Endothelial cell of umbilical vein (primary cell): ENCODE measurements at regions of chr3 and their contacts with region 1.

Region 1: DNA sequence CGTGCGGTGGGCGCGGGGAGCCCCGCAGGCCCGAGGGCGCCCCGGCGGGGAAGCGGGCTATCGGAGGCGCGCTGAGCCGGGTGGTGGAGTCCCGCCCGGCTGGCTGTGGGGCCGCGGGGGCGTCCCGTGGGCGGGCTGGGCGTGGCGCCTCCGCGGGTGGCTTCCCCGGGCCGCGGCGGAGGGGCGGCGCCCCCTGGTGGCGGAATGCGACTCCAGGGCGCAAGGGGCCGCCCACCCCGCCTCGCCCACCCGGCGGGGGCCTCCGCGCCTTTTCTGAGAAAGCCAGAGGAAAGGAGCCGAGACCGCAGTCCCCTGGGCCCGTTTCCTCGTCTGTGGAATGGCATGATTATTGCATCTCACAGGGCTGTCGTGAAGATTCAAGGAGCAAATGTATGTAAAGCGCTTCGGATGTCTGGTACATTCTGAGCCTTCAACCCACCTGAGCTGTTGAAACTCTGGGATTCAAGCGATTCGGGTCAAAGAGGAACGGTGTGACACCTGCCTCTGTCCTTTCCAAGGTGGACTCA is 31.9 kb upstream of the RAB6B start:
- DNase-seq: peak; percentile 37
- H3K4me3 ChIP-seq: peak overlapping the region; percentile 32 to 53 (median 39)
- H3K27ac ChIP-seq: no peak overlapping the region
- H3K4me1 ChIP-seq: peaks cover 7% of the 10 kb centered on the region
- H3K27me3 ChIP-seq: no peaks in the 10 kb centered on the region
- CTCF ChIP-seq: peak; percentile 70 to 87
- POLR2A ChIP-seq: no peak

Region 2: GRCh38 chr3:133487920-133488540 is 439.6 kb before region 1 on chr3:
- CTCF ChIA-PET with region 1: no interaction called
- POLR2A ChIA-PET with region 1: no interaction called
- dilution Hi-C with region 1: no loop called
- intact Hi-C with region 1: loop called (anchors 2 kb)
- DNase-seq: peak; percentile 37
- H3K4me3 ChIP-seq: no peak overlapping the region
- H3K27ac ChIP-seq: no peak overlapping the region
- H3K4me1 ChIP-seq: no peaks in the 10 kb centered on the region
- H3K27me3 ChIP-seq: no peaks in the 10 kb centered on the region
- CTCF ChIP-seq: peak; percentile 53 to 54
- POLR2A ChIP-seq: no peak

Region 3: GRCh38 chr3:133821767-133822638 is 105.6 kb before region 1 on chr3:
- CTCF ChIA-PET with region 1: interaction called, 29 read pairs
- POLR2A ChIA-PET with region 1: no interaction called
- dilution Hi-C with region 1: no loop called
- intact Hi-C with region 1: loop called (anchors 1 kb)
- DNase-seq: peak; percentile 44
- H3K4me3 ChIP-seq: no peak overlapping the region
- H3K27ac ChIP-seq: no peak overlapping the region
- H3K4me1 ChIP-seq: no peaks in the 10 kb centered on the region
- H3K27me3 ChIP-seq: no peaks in the 10 kb centered on the region
- CTCF ChIP-seq: peak in 1 of 2 donors; percentile 18
- POLR2A ChIP-seq: no peak

Region 4: GRCh38 chr3:134197681-134198261 is 270.2 kb after region 1 on chr3:
- CTCF ChIA-PET with region 1: interaction called, 62 read pairs
- POLR2A ChIA-PET with region 1: no interaction called
- dilution Hi-C with region 1: loop called (anchors 25 kb)
- intact Hi-C with region 1: no loop called
- DNase-seq: peak; percentile 72
- H3K4me3 ChIP-seq: no peak overlapping the region
- H3K27ac ChIP-seq: no peak overlapping the region
- H3K4me1 ChIP-seq: peaks cover 23% of the 10 kb centered on the region
- H3K27me3 ChIP-seq: no peaks in the 10 kb centered on the region
- CTCF ChIP-seq: peak; percentile 55 to 61
- POLR2A ChIP-seq: no peak

Region 5: GRCh38 chr3:134299185-134299887 is 371.7 kb after region 1 on chr3:
- CTCF ChIA-PET with region 1: interaction called, 4 read pairs
- POLR2A ChIA-PET with region 1: interaction called, 3 read pairs
- dilution Hi-C with region 1: no loop called
- intact Hi-C with region 1: loop called (anchors 1 kb)
- DNase-seq: peak; percentile 22
- H3K4me3 ChIP-seq: no peak overlapping the region
- H3K27ac ChIP-seq: no peak overlapping the region
- H3K4me1 ChIP-seq: no peaks in the 10 kb centered on the region
- H3K27me3 ChIP-seq: peaks cover 0 to 3% of the 10 kb centered on the region in 2 experiments
- CTCF ChIP-seq: no peak
- POLR2A ChIP-seq: no peak